Gastrocnemius medialis (tissue), 4 donors: ENCODE measurements at regions of chr13 and their contacts with region 1.

Region 1: DNA sequence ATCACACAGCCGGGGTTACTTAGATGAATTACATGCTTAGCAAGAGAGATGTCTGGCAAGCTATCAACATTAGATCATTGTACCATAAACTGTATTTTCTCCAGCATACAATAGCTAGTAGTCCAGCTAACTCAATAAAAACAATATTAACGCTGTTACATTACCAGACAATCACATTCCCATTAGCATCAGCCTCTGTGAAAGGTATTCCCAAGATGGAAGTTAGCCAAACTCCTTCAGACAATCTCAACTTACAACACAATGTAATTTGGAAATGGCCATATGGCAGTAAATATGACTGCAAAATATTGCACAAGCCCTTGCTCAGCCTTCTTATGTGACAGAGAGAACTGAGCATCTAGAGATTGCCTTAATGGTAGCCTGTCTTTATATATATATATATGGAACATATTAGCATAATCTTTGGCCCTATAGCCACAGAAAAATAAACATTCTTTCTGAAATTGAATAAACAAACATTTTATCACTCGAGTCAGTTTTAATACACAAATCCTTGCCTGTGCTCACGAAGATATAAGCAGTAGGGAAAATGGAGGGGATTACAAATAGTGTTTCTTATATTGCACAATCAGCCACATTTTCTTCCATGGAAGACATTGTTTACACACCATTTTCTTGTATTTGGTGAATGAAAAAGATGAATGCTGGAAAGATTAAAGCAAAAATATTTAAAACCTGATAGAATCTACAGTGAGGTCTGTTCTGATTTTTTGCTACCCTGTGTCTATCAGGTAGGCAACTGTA is 1060.5 kb downstream of the DIAPH3 start:
- DNase-seq: no peak
- ATAC-seq: no peak
- H3K4me3 ChIP-seq: no peak overlapping the region
- H3K27ac ChIP-seq: no peak overlapping the region
- H3K4me1 ChIP-seq: no peaks in the 10 kb centered on the region
- H3K27me3 ChIP-seq: no peaks in the 10 kb centered on the region
- CTCF ChIP-seq: no peak
- POLR2A ChIP-seq: no peak

Region 2: GRCh38 chr13:59043016-59043415 is 60.2 kb before region 1 on chr13:
- in situ Hi-C with region 1: loop called in 1 of 4 experiments (anchors 10 kb)
- intact Hi-C with region 1: no loop called
- DNase-seq: no peak
- ATAC-seq: no peak
- H3K4me3 ChIP-seq: no peak overlapping the region
- H3K27ac ChIP-seq: no peak overlapping the region
- H3K4me1 ChIP-seq: no peaks in the 10 kb centered on the region
- H3K27me3 ChIP-seq: no peaks in the 10 kb centered on the region
- CTCF ChIP-seq: no peak
- POLR2A ChIP-seq: no peak